ENCODE measurements at regions of chr9 and their contacts with region 1.

Region 1: DNA sequence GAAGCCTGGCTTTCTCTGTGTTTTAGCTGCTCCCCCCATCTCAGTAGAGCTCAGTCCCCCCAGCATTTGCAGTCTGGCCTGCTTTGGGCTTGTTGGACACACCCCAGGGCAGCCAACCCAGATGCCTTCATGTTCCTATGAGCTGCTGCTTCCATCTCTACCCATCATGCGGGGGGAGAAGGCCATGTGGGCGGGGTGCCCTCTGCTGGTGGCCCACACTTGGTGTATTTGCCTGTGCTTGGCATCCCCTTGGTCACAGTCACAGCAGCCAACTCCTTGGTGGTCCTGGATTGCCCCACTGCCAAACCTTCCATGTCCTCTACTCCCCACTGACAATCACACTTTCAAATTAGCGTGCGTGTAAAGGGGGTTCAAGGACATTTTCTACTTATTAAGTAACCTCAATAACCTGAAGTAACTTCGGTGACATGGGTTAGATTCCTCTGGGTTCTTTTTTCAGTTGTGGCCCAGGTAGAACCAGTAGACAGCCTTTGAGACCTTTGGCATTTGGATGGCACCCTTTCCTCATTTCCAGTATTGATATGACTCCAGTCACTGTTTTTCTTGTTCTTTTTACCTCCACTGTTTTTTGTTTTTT is 42.8 kb downstream of the SNX30 start:
- DNase-seq: peak; percentile 70 to 78 (median 75)
- H3K4me3 ChIP-seq: no peak overlapping the region
- H3K4me3 Mint-ChIP-seq: no peak overlapping the region
- H3K27ac ChIP-seq: no peak overlapping the region
- H3K27ac Mint-ChIP-seq: peak overlapping the region in 4 of 7 donors; percentile 9 to 47 (median 37)
- H3K4me1 ChIP-seq: peaks cover 6% of the 10 kb centered on the region
- H3K4me1 Mint-ChIP-seq: peaks cover 9 to 34% (median 20%) of the 10 kb centered on the region in 4 donors
- H3K27me3 ChIP-seq: no peaks in the 10 kb centered on the region
- H3K27me3 Mint-ChIP-seq: no peaks in the 10 kb centered on the region

Region 2: DNA sequence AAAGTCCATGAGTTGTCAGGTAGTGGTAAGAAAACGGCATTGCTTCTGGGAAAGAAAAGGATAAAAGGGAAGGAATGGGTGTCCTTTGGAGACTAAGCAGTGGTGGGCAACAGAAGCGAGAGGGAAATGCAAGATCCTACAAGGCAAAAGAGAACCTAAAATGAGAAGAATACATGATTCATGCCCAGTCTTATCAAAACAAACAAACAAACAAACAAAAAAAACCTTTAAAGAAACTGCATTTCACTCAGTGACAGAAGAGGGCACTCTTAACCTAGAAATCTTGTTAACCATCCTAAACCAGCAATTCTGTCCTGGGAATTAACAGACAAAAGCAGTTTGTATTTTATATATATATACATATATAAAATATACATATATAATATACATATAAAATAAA is 706.7 kb before region 1 on chr9:
- CTCF ChIA-PET with region 1: no interaction called
- POLR2A ChIA-PET with region 1: no interaction called
- intact Hi-C with region 1: loop called (anchors 5 kb)
- DNase-seq: peak in 2 of 5 donors; percentile 12 to 17
- H3K4me3 ChIP-seq: no peak overlapping the region
- H3K4me3 Mint-ChIP-seq: no peak overlapping the region
- H3K27ac ChIP-seq: no peak overlapping the region
- H3K27ac Mint-ChIP-seq: peak overlapping the region in 1 of 7 donors; percentile 11
- H3K4me1 ChIP-seq: no peaks in the 10 kb centered on the region
- H3K4me1 Mint-ChIP-seq: no peaks in the 10 kb centered on the region
- H3K27me3 ChIP-seq: no peaks in the 10 kb centered on the region
- H3K27me3 Mint-ChIP-seq: no peaks in the 10 kb centered on the region

Region 3: GRCh38 chr9:112361601-112362000 is 431.7 kb before region 1 on chr9:
- CTCF ChIA-PET with region 1: interaction called, 4 read pairs
- POLR2A ChIA-PET with region 1: no interaction called
- intact Hi-C with region 1: loop called (anchors 1 kb)
- DNase-seq: peak in 4 of 5 donors; percentile 42 to 48 (median 46)
- H3K4me3 ChIP-seq: no peak overlapping the region
- H3K4me3 Mint-ChIP-seq: no peak overlapping the region
- H3K27ac ChIP-seq: no peak overlapping the region
- H3K27ac Mint-ChIP-seq: no peak overlapping the region
- H3K4me1 ChIP-seq: no peaks in the 10 kb centered on the region
- H3K4me1 Mint-ChIP-seq: peaks cover 0 to 2% (median 1%) of the 10 kb centered on the region in 4 donors
- H3K27me3 ChIP-seq: no peaks in the 10 kb centered on the region
- H3K27me3 Mint-ChIP-seq: peaks cover 2 to 5% of the 10 kb centered on the region in 2 donors

Region 4: GRCh38 chr9:112699230-112699629 is 94.1 kb before region 1 on chr9:
- CTCF ChIA-PET with region 1: interaction called, 3 read pairs
- POLR2A ChIA-PET with region 1: no interaction called
- intact Hi-C with region 1: loop called (anchors 5 kb)
- DNase-seq: peak; percentile 4 to 48 (median 16)
- H3K4me3 ChIP-seq: no peak overlapping the region
- H3K4me3 Mint-ChIP-seq: no peak overlapping the region
- H3K27ac ChIP-seq: no peak overlapping the region
- H3K27ac Mint-ChIP-seq: peak overlapping the region in 1 of 7 donors; percentile 18
- H3K4me1 ChIP-seq: peaks cover 6% of the 10 kb centered on the region
- H3K4me1 Mint-ChIP-seq: peaks cover 15 to 38% (median 18%) of the 10 kb centered on the region in 4 donors
- H3K27me3 ChIP-seq: no peaks in the 10 kb centered on the region
- H3K27me3 Mint-ChIP-seq: no peaks in the 10 kb centered on the region

Region 5: GRCh38 chr9:112750111-112750767 is 43.1 kb before region 1 on chr9 and contains the start of gene SNX30:
- CTCF ChIA-PET with region 1: interaction called, 5 read pairs
- POLR2A ChIA-PET with region 1: interaction called, 4 read pairs
- intact Hi-C with region 1: loop called (anchors 1 kb)
- DNase-seq: peak; percentile 76 to 84 (median 80)
- H3K4me3 ChIP-seq: peak within 1 kb of the TSS; percentile 57 to 77
- H3K4me3 Mint-ChIP-seq: peak within 1 kb of the TSS; percentile 85 to 93 (median 90)
- H3K27ac ChIP-seq: peak within 1 kb of the TSS; percentile 67
- H3K27ac Mint-ChIP-seq: peak within 1 kb of the TSS; percentile 87 to 97 (median 96)
- H3K4me1 ChIP-seq: peaks cover 62% of the 10 kb centered on the region
- H3K4me1 Mint-ChIP-seq: peaks cover 44 to 70% (median 56%) of the 10 kb centered on the region in 4 donors
- H3K27me3 ChIP-seq: no peaks in the 10 kb centered on the region
- H3K27me3 Mint-ChIP-seq: no peaks in the 10 kb centered on the region
- total RNA-seq, gene SNX30: 10.8 to 10.9 TPM

Measured in CD4-positive, alpha-beta memory T cell (primary cell).